CD4-positive, alpha-beta T cell (primary cell): ENCODE measurements at regions of chr11 and their contacts with region 1.

Region 1: DNA sequence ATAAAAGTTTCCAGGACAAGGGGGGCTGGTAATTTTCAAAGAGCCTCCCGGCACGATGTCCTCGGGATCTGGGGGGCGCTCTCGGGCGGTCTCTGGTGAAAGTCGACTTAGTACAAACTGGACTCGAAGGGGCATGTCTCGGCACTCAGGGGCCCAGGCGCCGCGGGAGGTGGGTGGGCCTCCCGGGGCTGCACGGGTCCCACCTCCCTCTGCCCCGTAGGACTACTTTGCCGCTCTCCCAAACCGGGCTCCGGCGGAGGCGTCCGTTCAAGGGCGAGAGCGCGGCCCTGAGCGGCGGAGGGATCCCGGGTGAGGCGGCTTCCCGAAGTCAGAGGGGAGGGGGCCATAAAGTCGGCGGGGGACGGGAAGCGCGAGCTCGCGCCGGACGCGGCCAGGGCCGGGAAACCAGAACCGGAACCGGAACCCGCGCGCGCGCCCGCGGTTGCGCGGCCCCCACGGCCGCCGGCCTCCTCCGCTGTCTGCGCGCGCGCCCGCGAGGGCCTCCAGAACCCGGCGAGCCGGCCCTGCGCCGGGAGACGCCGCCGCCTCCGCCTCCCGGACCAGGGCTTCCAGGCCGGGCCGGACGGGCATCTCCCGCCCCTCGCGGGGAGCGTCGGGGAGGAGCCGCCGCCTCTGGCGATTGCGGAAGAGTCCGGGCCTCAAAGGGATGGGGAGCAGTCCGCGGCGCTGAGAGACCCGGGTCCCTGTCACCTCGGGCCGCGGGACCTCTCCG is at the start of gene ARHGEF12:
- DNase-seq: peak; percentile 30 to 86 (median 62)
- ATAC-seq: peak; percentile 42
- H3K4me3 ChIP-seq: peak within 1 kb of the TSS; percentile 77
- H3K4me3 Mint-ChIP-seq: peak within 1 kb of the TSS; percentile 89
- H3K27ac ChIP-seq: no peak within 1 kb of the TSS
- H3K27ac Mint-ChIP-seq: no peak within 1 kb of the TSS
- H3K4me1 ChIP-seq: peaks cover 26% of the 10 kb centered on the region
- H3K4me1 Mint-ChIP-seq: peaks cover 30% of the 10 kb centered on the region
- H3K27me3 ChIP-seq: peaks cover 27 to 53% of the 10 kb centered on the region in 2 experiments
- H3K27me3 Mint-ChIP-seq: peaks cover 67% of the 10 kb centered on the region
- CTCF ChIP-seq: no peak
- total RNA-seq, gene ARHGEF12: 3.6 TPM

Region 2: DNA sequence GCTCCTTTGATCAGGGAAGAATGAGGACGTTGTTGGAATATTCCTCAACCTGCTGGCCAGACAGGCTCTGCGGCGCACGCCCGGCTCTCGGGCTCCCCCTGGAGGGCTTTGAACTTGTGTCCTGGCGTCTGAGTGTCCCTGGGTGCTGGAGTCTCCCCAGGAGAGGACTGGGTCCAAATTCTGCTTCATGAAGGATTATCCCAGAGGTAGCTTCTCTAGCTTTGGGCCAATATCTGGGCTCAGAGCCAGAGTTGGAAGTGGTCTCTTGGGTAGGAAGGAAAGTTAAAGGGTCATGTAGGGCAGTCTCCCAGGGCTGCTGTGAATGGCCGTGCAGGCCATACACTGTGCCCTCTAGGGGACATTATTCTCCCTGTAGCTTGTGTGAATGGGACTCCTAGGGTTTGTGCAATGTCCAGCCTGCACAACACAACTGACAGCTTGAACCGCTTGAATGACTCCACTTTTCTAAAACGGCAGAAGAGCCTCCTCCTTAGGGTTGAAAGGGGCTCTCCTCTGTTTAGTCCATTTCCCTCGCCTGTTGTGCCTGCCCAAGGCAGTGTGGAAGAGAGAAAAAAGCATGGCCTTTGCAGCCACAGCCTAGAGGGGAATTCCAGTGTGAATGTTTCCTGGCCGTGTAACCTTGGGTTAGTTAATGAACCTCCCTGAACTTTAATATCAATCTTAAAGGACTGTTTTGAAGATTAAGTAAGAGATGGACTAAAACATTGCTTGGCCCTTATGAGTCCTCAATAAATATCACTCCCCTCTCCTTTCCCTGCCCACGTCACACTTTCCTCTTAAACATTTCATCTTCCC is 801.9 kb before region 1 on chr11:
- CTCF ChIA-PET with region 1: no interaction called
- POLR2A ChIA-PET with region 1: no interaction called
- intact Hi-C with region 1: no loop called
- DNase-seq: peak; percentile 8 to 62 (median 34)
- ATAC-seq: no peak
- H3K4me3 ChIP-seq: no peak overlapping the region
- H3K4me3 Mint-ChIP-seq: no peak overlapping the region
- H3K27ac ChIP-seq: no peak overlapping the region
- H3K27ac Mint-ChIP-seq: no peak overlapping the region
- H3K4me1 ChIP-seq: no peaks in the 10 kb centered on the region
- H3K4me1 Mint-ChIP-seq: no peaks in the 10 kb centered on the region
- H3K27me3 ChIP-seq: peaks cover 2 to 5% of the 10 kb centered on the region in 2 experiments
- H3K27me3 Mint-ChIP-seq: peaks cover 39% of the 10 kb centered on the region
- CTCF ChIP-seq: peak; percentile 78

Region 3: GRCh38 chr11:120682866-120683265 is 346.8 kb after region 1 on chr11:
- CTCF ChIA-PET with region 1: interaction called, 12 read pairs
- POLR2A ChIA-PET with region 1: interaction called, 8 read pairs
- intact Hi-C with region 1: loop called (anchors 1 kb)
- DNase-seq: no peak
- ATAC-seq: no peak
- H3K4me3 ChIP-seq: no peak overlapping the region
- H3K4me3 Mint-ChIP-seq: no peak overlapping the region
- H3K27ac ChIP-seq: no peak overlapping the region
- H3K27ac Mint-ChIP-seq: no peak overlapping the region
- H3K4me1 ChIP-seq: no peaks in the 10 kb centered on the region
- H3K4me1 Mint-ChIP-seq: no peaks in the 10 kb centered on the region
- H3K27me3 ChIP-seq: peaks cover 3 to 4% of the 10 kb centered on the region in 2 experiments
- H3K27me3 Mint-ChIP-seq: peaks cover 48% of the 10 kb centered on the region
- CTCF ChIP-seq: no peak

Region 4: DNA sequence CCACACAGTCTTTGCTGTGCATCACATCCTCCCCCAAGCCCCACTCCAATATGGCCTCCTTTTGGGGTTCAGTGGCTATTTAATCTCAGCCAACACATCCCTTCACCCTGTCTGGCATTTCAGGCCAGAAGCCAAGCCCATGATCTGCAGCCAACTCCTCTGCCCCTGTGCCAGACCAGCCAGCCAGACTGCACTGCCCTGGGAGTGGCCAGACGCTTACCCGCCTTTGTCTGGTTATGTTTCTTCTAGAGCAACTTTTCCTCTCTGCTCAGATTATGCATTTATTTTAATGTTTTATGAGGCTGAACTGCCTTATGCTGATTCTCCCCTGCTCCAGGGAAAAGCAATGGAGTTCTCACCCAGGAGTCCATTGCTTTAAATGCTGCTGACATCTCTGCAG is 481.1 kb after region 1 on chr11:
- CTCF ChIA-PET with region 1: no interaction called
- POLR2A ChIA-PET with region 1: no interaction called
- intact Hi-C with region 1: loop called in 1 of 2 experiments (anchors 10 kb)
- DNase-seq: no peak
- ATAC-seq: no peak
- H3K4me3 ChIP-seq: no peak overlapping the region
- H3K4me3 Mint-ChIP-seq: no peak overlapping the region
- H3K27ac ChIP-seq: no peak overlapping the region
- H3K27ac Mint-ChIP-seq: no peak overlapping the region
- H3K4me1 ChIP-seq: no peaks in the 10 kb centered on the region
- H3K4me1 Mint-ChIP-seq: no peaks in the 10 kb centered on the region
- H3K27me3 ChIP-seq: no peaks in the 10 kb centered on the region
- H3K27me3 Mint-ChIP-seq: peaks cover 32% of the 10 kb centered on the region
- CTCF ChIP-seq: no peak

Region 5: DNA sequence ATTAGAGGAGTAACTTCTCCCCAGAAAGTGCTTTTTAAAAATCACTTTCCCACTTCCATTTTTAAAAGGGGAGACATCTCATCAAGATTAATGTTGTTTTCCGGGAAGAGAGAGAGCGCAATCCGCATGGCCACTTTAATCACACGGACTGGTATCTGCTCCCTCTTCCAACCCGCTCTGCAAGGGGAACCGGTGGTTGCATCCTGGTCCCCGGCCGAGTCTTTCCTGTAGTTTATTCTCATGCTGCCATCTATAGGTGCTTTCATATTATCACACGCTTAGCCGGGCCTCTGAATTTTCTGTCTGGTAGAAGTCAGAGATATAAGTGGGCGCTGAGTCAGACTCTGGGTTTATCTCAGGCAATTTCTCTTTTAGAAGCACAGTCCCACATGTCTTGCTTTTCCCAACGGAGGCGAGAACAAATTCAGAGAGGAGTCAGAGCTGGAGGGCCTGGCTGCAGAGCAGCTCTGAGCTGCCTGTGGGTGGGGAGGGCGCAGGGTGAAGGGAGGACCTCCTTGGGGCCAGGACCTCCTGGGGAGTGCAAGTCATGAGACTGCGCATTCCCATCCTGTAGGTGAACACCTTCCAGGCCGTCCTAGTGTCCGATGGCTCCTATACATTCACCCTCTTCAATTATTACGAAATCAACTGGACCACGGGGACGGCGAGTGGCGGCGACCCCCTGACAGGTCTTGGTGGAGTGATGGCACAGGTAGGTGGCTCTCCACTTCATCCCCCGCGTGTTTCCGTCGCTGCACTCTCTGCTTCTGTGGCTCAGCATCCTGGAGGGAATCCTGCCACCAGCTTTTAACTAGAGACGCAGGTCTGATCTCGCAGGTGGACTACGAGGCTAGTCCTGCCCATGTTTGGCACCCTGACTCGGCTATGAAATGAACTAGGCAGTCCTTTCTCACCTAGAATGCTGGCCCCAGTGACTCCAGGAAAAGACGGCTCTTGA is 776.7 kb after region 1 on chr11:
- CTCF ChIA-PET with region 1: no interaction called
- POLR2A ChIA-PET with region 1: no interaction called
- intact Hi-C with region 1: loop called (anchors 1 to 5 kb)
- DNase-seq: peak in 9 of 14 experiments; percentile 2 to 45 (median 11)
- ATAC-seq: no peak
- H3K4me3 ChIP-seq: no peak overlapping the region
- H3K4me3 Mint-ChIP-seq: no peak overlapping the region
- H3K27ac ChIP-seq: no peak overlapping the region
- H3K27ac Mint-ChIP-seq: no peak overlapping the region
- H3K4me1 ChIP-seq: peaks cover 4% of the 10 kb centered on the region
- H3K4me1 Mint-ChIP-seq: no peaks in the 10 kb centered on the region
- H3K27me3 ChIP-seq: peaks cover 4 to 6% of the 10 kb centered on the region in 2 experiments
- H3K27me3 Mint-ChIP-seq: peaks cover 23% of the 10 kb centered on the region
- CTCF ChIP-seq: peak; percentile 56